Dendritic cell treated with granulocyte-macrophage colony-stimulating factor and Interleukin-4, amounts not matched to agents 40 ng/mL and 50 ng/mL, for 4 days (primary cell): ENCODE measurements at regions of chr1 and their contacts with region 1.

Region 1: GRCh38 chr1:151839457-151840405 is at the start of gene C2CD4D:
- H3K4me3 Mint-ChIP-seq: peak within 1 kb of the TSS; percentile 63
- H3K27ac Mint-ChIP-seq: no peak within 1 kb of the TSS
- H3K4me1 Mint-ChIP-seq: peaks cover 38% of the 10 kb centered on the region
- H3K27me3 Mint-ChIP-seq: peaks cover 65% of the 10 kb centered on the region

Region 2: DNA sequence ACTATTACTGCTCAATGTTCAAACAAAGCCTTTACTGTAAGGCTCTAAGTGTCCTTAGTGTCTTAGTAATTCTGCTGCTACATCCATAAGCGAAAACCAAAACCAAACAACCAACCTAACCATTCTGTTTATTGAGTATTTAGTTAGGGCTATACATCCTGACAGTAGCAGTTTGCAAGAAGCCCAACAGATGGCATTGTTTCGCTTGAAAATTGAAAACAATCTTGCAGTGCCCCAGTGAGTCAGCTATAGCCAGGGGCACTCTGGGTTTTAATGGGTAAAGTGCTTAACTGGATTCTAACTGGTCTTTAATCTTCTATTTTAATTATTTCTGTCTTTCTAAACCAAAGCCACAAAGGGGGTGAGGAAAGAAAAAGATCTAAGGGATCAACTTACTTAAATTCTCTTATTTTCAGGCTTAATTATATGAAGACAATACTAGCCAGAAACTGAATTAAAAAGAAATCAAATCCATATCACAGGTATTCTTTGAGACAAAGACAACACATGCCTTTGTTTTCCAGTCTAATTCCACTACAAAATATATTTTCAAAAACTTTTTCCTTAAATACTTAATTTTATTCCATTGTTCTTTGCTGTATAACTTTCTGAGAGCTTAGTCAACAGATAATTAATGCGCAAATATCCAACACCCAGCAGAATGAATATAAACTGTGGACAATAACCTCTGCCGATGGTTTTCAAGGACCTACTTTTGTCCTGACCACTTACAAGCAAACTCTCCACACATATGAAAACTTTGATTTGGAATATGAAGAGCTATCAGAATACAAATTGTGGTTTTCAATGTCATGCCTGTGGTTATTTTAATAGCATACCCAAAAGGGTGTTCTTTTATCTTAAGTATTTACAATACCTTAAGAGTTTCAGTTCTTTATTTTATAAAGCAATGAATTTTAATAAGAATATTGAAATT is 395.6 kb before region 1 on chr1:
- intact Hi-C with region 1: loop called (anchors 10 kb)
- H3K4me3 Mint-ChIP-seq: no peak overlapping the region
- H3K27ac Mint-ChIP-seq: peak overlapping the region; percentile 38
- H3K4me1 Mint-ChIP-seq: peaks cover 18% of the 10 kb centered on the region
- H3K27me3 Mint-ChIP-seq: no peaks in the 10 kb centered on the region

Region 3: GRCh38 chr1:151534665-151535278 is 305.0 kb before region 1 on chr1:
- intact Hi-C with region 1: loop called (anchors 1 kb)
- H3K4me3 Mint-ChIP-seq: no peak overlapping the region
- H3K27ac Mint-ChIP-seq: no peak overlapping the region
- H3K4me1 Mint-ChIP-seq: peaks cover 17% of the 10 kb centered on the region
- H3K27me3 Mint-ChIP-seq: peaks cover 11% of the 10 kb centered on the region

Region 4: GRCh38 chr1:151739590-151740375 is 99.9 kb before region 1 on chr1:
- intact Hi-C with region 1: loop called (anchors 1 kb)
- H3K4me3 Mint-ChIP-seq: peak overlapping the region; percentile 11
- H3K27ac Mint-ChIP-seq: no peak overlapping the region
- H3K4me1 Mint-ChIP-seq: peaks cover 16% of the 10 kb centered on the region
- H3K27me3 Mint-ChIP-seq: peaks cover 21% of the 10 kb centered on the region

Region 5: DNA sequence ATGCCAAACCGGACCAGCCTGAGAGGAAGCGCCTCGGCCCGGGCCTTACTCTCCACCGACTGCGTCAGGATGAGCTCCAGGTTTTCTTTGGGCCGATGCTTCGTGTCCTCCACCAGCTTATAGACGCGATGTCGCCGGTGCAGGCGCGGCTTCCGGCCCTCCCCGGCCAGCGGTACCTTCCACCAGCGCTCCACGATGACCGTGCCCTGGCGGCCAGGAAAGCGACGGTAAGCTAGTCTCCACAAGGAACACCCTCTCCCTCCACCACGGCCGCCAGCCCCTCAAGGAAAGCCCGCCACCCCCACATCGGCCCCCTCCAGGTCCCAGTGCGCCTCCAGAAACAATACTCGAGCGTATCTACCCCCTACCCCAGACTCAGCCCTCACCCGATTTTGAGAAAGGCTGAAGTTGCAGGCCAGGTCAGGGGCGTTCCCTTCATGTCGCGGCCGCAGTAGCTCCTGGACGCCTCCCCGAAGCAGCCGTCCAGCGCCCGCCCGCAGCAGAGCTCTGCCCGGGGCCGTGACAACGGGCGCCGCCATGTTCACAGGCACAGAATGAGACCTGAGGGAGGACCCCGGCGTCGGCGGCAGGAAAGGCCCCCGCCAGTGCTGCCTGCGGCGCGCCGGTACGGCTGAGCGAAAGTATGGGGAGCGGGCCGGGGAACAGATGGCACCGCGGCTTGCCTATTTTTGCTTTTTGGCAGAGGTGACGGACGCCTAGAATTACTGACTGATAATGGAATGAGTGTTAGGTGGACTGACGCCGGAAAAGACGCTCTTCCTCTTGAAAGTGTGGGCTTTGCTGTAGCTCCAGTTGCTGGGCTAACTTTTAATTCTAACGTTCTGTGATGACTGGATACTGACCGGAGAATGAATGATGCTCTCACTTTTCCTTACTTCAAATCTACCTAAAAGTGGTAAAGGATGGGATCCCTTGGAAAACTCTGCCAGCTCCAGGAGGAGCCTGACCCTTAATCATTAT is 76.5 kb before region 1 on chr1 and contains the start of gene MRPL9:
- intact Hi-C with region 1: loop called (anchors 10 kb)
- H3K4me3 Mint-ChIP-seq: peak within 1 kb of the TSS; percentile 91
- H3K27ac Mint-ChIP-seq: peak within 1 kb of the TSS; percentile 94
- H3K4me1 Mint-ChIP-seq: peaks cover 50% of the 10 kb centered on the region
- H3K27me3 Mint-ChIP-seq: no peaks in the 10 kb centered on the region

Region 6: GRCh38 chr1:151867785-151868411 is 28.2 kb after region 1 on chr1:
- intact Hi-C with region 1: no loop called
- H3K4me3 Mint-ChIP-seq: no peak overlapping the region
- H3K27ac Mint-ChIP-seq: peak overlapping the region; percentile 18
- H3K4me1 Mint-ChIP-seq: peaks cover 25% of the 10 kb centered on the region
- H3K27me3 Mint-ChIP-seq: peaks cover 2% of the 10 kb centered on the region